GM12878 (cell line): ENCODE measurements at regions of chr12 and their contacts with region 1.

Region 1: DNA sequence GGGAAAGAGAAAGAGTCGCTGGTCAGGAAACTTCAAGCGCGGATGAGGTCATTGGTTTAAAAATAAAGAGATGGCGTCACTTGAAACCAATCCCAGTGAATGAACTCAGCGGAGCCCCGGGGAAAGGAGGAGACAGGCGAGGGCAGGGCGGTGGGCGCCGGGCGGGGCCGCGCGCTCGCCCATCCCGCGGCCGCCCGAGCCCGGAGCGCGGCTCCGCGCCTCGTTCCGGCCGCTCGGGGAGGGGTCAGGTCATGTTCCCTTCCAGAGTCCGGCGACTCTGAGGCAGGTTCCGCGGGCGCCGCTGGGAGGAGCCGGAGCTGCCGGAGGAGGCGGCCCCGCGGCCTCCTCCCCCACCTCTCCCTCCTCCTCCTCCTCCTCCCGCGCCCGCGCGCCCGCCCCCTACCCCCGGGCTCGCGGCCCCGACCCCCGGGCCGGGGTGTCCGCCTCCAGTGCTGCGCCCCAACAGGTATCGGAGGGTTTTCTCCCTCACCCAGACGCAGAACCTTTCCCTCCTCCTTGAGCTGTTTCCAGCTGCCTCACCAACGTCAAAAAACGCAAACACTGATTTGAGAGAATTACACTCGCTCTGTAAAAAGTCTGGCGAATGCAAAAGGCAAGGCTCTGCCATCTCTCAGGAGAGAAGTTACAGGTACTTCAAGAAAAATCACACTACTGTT is at the start of gene DUSP16:
- DNase-seq: peak; percentile 75
- ATAC-seq: peak; percentile 78
- H3K4me3 ChIP-seq: peak within 1 kb of the TSS; percentile 97
- H3K27ac ChIP-seq: peak within 1 kb of the TSS; percentile 100
- H3K4me1 ChIP-seq: peaks cover 13% of the 10 kb centered on the region
- H3K27me3 ChIP-seq: no peaks in the 10 kb centered on the region
- CTCF ChIP-seq: peak in 1 of 3 experiments; percentile 27; a peak in 1 of 6 replicates
- EP300 ChIP-seq: 0 out of 4 replicates have a peak, but pooled peaks of 1 of the 2 experiments have one; percentile 10
- POLR2A ChIP-seq: peak; percentile 80
- RAD21 ChIP-seq: 0 out of 2 replicates have a peak, but pooled peaks have one; percentile 18
- polyA plus RNA-seq, gene DUSP16: 3.9 to 5.0 TPM

Region 2: GRCh38 chr12:12376646-12377448 is 185.9 kb before region 1 on chr12:
- CTCF ChIA-PET with region 1: interaction called, 33 read pairs
- POLR2A ChIA-PET with region 1: interaction called, 4 read pairs
- RAD21 ChIA-PET with region 1: interaction called, 24 read pairs
- SMC1A ChIA-PET with region 1: interaction called, 28 read pairs
- in situ Hi-C with region 1: loop called (anchors 10 kb)
- intact Hi-C with region 1: loop called (anchors 1 kb)
- DNase-seq: peak; percentile 55
- ATAC-seq: peak; percentile 76
- H3K4me3 ChIP-seq: no peak overlapping the region
- H3K27ac ChIP-seq: no peak overlapping the region; the same call in 1 of the 2 replicates
- H3K4me1 ChIP-seq: peaks cover 6% of the 10 kb centered on the region
- H3K27me3 ChIP-seq: no peaks in the 10 kb centered on the region
- CTCF ChIP-seq: peak; percentile 41 to 81 (median 58); a peak in 5 of 6 replicates
- EP300 ChIP-seq: no peak
- POLR2A ChIP-seq: no peak
- RAD21 ChIP-seq: peak; percentile 98

Region 3: GRCh38 chr12:12486661-12487240 is 76.0 kb before region 1 on chr12:
- CTCF ChIA-PET with region 1: interaction called, 7 read pairs
- POLR2A ChIA-PET with region 1: interaction called, 5 read pairs
- RAD21 ChIA-PET with region 1: interaction called, 8 read pairs
- SMC1A ChIA-PET with region 1: interaction called, 19 read pairs
- in situ Hi-C with region 1: no loop called
- intact Hi-C with region 1: no loop called
- DNase-seq: peak; percentile 57
- ATAC-seq: peak; percentile 93
- H3K4me3 ChIP-seq: no peak overlapping the region
- H3K27ac ChIP-seq: peak overlapping the region; percentile 58
- H3K4me1 ChIP-seq: peaks cover 19% of the 10 kb centered on the region
- H3K27me3 ChIP-seq: no peaks in the 10 kb centered on the region
- CTCF ChIP-seq: no peak
- EP300 ChIP-seq: peak; percentile 96 to 98
- POLR2A ChIP-seq: no peak
- RAD21 ChIP-seq: no peak

Region 4: GRCh38 chr12:12546314-12546772 is 16.4 kb before region 1 on chr12:
- CTCF ChIA-PET with region 1: interaction called, 4 read pairs
- POLR2A ChIA-PET with region 1: interaction called, 29 read pairs
- RAD21 ChIA-PET with region 1: interaction called, 8 read pairs
- SMC1A ChIA-PET with region 1: interaction called, 22 read pairs
- in situ Hi-C with region 1: no loop called
- intact Hi-C with region 1: no loop called
- DNase-seq: no peak
- ATAC-seq: peak; percentile 9; the same call in 1 of the 3 replicates
- H3K4me3 ChIP-seq: no peak overlapping the region
- H3K27ac ChIP-seq: no peak overlapping the region
- H3K4me1 ChIP-seq: peaks cover 10% of the 10 kb centered on the region; the same call in 1 of the 2 replicates
- H3K27me3 ChIP-seq: no peaks in the 10 kb centered on the region
- CTCF ChIP-seq: no peak
- EP300 ChIP-seq: no peak
- POLR2A ChIP-seq: no peak
- RAD21 ChIP-seq: no peak

Region 5: GRCh38 chr12:12611512-12612306 is 49.0 kb after region 1 on chr12 and contains the start of gene CREBL2:
- CTCF ChIA-PET with region 1: interaction called, 22 read pairs
- POLR2A ChIA-PET with region 1: interaction called, 4 read pairs
- RAD21 ChIA-PET with region 1: interaction called, 19 read pairs
- SMC1A ChIA-PET with region 1: interaction called, 13 read pairs
- in situ Hi-C with region 1: no loop called
- intact Hi-C with region 1: loop called (anchors 2 kb)
- DNase-seq: peak; percentile 80
- ATAC-seq: peak; percentile 82
- H3K4me3 ChIP-seq: peak within 1 kb of the TSS; percentile 86
- H3K27ac ChIP-seq: peak within 1 kb of the TSS; percentile 94
- H3K4me1 ChIP-seq: peaks cover 17% of the 10 kb centered on the region
- H3K27me3 ChIP-seq: no peaks in the 10 kb centered on the region
- CTCF ChIP-seq: no peak
- EP300 ChIP-seq: no peak
- POLR2A ChIP-seq: peak; percentile 92
- RAD21 ChIP-seq: no peak
- polyA plus RNA-seq, gene CREBL2: 4.6 to 5.2 TPM

Region 6: GRCh38 chr12:12704593-12705230 is 142.0 kb after region 1 on chr12:
- CTCF ChIA-PET with region 1: interaction called, 3 read pairs
- POLR2A ChIA-PET with region 1: no interaction called
- RAD21 ChIA-PET with region 1: interaction called, 7 read pairs
- SMC1A ChIA-PET with region 1: interaction called, 11 read pairs
- in situ Hi-C with region 1: no loop called
- intact Hi-C with region 1: loop called (anchors 5 kb)
- DNase-seq: no peak
- ATAC-seq: peak; percentile 89
- H3K4me3 ChIP-seq: no peak overlapping the region
- H3K27ac ChIP-seq: no peak overlapping the region
- H3K4me1 ChIP-seq: peaks cover 18% of the 10 kb centered on the region
- H3K27me3 ChIP-seq: no peaks in the 10 kb centered on the region
- CTCF ChIP-seq: peak; percentile 69 to 97 (median 93); a peak in 5 of 6 replicates
- EP300 ChIP-seq: no peak
- POLR2A ChIP-seq: no peak
- RAD21 ChIP-seq: peak; percentile 99